Stomach (tissue), 19 donors: ENCODE measurements at regions of chr3 and their contacts with region 1.

Region 1: GRCh38 chr3:53195602-53196574 is 34.9 kb downstream of the PRKCD start:
- DNase-seq: peak; percentile 59 to 85
- H3K4me3 ChIP-seq: no peak overlapping the region
- H3K27ac ChIP-seq: no peak overlapping the region
- H3K4me1 ChIP-seq: peaks cover 16 to 42% (median 25%) of the 10 kb centered on the region in 4 donors
- H3K27me3 ChIP-seq: no peaks in the 10 kb centered on the region
- CTCF ChIP-seq: peak in 6 of 7 experiments; percentile 93 to 99 (median 95)
- EP300 ChIP-seq: no peak
- POLR2A ChIP-seq: no peak

Region 2: GRCh38 chr3:53113293-53114010 is 82.4 kb before region 1 on chr3:
- intact Hi-C with region 1: loop called (anchors 2 kb)
- DNase-seq: peak in 1 of 2 donors; percentile 62
- H3K4me3 ChIP-seq: no peak overlapping the region
- H3K27ac ChIP-seq: peak overlapping the region in 3 of 5 donors; percentile 52 to 75 (median 52)
- H3K4me1 ChIP-seq: peaks cover 6 to 62% (median 29%) of the 10 kb centered on the region in 4 donors
- H3K27me3 ChIP-seq: no peaks in the 10 kb centered on the region
- CTCF ChIP-seq: no peak
- EP300 ChIP-seq: no peak
- POLR2A ChIP-seq: no peak